Motor neuron (in vitro differentiated cells): ENCODE measurements at regions of chr20 and their contacts with region 1.

Region 1: GRCh38 chr20:24823989-24824693 is 124.9 kb upstream of the CST7 start:
- ATAC-seq: no peak
- H3K4me3 ChIP-seq: no peak overlapping the region
- H3K27ac ChIP-seq: no peak overlapping the region
- H3K4me1 ChIP-seq: peaks cover 0 to 4% of the 10 kb centered on the region in 2 donors

Region 2: DNA sequence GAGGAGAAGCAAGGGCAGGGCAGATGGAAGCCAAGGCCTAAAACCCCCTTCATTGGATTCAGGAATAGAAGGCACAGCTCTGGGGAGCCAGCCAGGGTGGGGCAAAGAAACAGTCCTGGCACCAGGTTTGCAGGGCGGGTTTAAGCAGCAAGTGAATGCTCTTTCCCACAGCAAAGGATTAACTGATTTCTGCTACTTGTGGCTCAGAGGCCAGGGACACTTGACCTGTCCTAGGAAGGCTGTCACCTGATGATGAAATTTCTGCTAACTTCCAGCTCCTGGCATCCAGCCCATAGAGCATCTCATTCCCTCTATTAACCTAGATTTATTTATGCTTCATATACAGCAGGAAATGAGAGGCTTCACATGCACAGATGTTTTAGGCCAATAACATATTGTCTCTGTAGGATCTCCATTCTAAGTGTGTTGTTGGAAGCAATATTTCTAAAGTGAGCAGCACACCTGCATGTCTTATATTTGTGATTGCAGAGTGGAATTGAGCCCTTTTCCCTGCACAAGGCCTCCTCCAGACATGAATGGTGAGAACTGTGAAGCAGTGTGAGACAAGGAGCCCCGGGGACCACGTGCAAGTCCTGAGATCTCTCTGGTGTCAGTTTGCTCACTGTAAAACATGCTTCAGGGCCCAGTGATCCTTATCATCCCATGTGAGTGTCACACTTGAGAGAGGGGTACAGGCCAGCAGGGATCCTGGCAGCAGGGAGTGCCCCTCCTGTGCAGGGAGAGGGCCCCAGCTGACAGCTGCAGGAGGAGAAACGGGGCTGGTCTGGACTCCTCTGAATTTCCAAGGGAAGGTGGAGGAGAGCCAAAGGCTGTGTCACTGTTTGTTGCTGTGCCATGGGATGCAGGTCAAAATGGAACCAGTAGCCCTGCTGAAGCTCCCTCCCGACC is 903.5 kb before region 1 on chr20:
- in situ Hi-C with region 1: no loop called
- ATAC-seq: peak in 7 of 8 experiments; percentile 7 to 65 (median 27)
- H3K4me3 ChIP-seq: no peak overlapping the region
- H3K27ac ChIP-seq: no peak overlapping the region
- H3K4me1 ChIP-seq: no peaks in the 10 kb centered on the region

Region 3: DNA sequence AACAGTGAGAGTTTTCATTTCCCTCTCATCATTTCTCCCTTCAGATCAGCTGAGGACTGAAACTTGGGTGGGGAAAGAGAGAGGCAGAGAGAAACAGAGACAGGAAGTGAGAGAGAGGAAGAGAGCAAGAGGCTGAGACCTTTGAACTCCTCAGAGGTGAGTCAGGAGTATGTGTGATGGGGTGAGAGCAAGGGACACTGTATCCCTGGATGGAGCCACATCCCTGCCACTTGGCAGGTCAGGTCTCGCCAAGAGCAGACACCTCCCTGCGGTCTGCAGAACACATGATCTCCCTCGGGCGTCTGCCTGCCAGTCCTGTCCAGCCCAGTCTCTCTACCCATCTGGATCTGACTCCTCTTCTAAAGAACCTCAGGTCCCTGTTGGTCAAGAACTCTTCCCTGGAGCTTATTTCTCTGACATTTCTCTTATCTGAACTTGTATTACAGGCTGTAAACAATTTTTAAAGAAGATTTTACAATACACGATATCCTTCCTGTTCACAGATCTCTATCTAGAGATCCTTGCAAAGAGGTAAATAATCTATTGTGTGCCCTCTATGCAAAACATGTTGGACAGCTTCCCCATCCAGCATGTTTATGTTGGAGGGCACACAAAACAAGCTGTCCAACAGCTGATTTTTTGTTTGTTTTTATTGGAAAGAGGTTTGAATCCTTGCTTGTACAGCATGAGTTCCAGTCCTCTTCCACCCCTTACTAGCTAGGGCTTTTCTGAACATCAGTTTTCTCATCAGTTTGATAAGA is 417.2 kb before region 1 on chr20:
- in situ Hi-C with region 1: loop called in 1 of 9 experiments (anchors 25 kb)
- ATAC-seq: peak in 4 of 8 experiments; percentile 23 to 81 (median 68)
- H3K4me3 ChIP-seq: no peak overlapping the region
- H3K27ac ChIP-seq: no peak overlapping the region
- H3K4me1 ChIP-seq: peaks cover 0 to 3% of the 10 kb centered on the region in 2 donors